Caco-2 (cell line): ENCODE measurements at regions of chr2 and their contacts with region 1.

Region 1: DNA sequence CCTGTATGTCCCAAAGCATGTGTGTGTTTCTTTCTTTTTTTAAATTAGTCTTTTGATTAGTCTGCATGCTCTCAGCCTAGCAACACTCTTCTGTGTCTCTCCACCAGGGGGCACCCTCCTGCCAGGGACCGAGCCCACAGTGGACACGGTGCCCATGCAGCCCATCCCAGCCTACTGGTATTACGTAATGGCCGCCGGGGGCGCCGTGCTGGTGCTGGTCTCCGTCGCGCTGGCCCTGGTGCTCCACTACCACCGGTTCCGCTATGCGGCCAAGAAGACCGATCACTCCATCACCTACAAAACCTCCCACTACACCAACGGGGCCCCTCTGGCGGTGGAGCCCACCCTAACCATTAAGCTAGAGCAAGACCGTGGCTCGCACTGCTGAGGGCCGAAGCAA is 93.8 kb downstream of the NRP2 start:
- DNase-seq: peak; percentile 71 to 74
- H3K4me3 ChIP-seq: no peak overlapping the region
- H3K4me3 Mint-ChIP-seq: no peak overlapping the region
- H3K27ac Mint-ChIP-seq: no peak overlapping the region
- H3K4me1 ChIP-seq: peaks cover 12% of the 10 kb centered on the region
- H3K4me1 Mint-ChIP-seq: peaks cover 4% of the 10 kb centered on the region
- H3K27me3 ChIP-seq: no peaks in the 10 kb centered on the region
- H3K27me3 Mint-ChIP-seq: no peaks in the 10 kb centered on the region
- CTCF ChIP-seq: peak; percentile 68 to 80

Region 2: DNA sequence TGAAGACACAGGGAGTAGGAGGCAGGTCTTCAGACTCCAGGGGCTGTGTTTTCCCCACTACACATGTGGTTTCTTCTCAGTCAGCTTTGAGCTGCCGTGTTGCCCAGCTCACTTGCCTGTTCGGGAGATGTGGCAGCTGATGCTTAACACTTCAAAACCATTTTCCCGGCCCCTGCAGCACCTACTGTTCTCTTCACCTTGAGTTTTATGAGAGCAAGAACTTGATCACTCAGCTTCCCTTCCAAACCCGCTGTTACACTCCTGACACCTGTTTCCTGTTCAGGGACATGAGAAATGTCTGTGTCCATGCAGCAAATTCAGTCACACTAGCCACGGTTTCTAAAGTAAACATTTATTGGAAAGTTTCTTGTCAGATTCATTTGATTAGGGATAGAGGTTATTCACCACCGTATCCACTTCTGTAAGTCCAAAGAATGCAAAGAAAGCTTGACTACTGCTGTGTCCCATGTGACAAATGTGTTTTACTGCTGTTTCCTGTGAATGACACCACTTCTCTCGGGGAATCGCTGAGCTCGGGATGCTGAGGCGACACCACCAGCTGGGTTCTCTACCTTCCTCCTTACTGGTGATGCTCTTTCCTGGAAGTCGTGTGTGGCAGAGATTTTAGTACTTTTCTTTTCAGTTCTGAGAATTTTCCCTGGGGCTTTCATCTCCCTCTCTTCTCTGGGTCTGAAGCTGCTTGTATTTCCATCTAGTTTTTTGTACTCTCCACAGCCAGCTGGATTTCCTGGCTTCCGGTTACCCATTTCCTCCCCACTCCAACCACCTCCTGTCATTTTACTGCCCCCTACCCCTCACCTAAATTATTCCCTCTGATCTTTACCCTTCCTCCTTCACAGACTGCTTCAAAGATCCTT is 1297.9 kb after region 1 on chr2:
- CTCF ChIA-PET with region 1: no interaction called
- POLR2A ChIA-PET with region 1: no interaction called
- intact Hi-C with region 1: loop called (anchors 5 kb)
- DNase-seq: no peak
- H3K4me3 ChIP-seq: no peak overlapping the region
- H3K4me3 Mint-ChIP-seq: no peak overlapping the region
- H3K27ac Mint-ChIP-seq: no peak overlapping the region
- H3K4me1 ChIP-seq: no peaks in the 10 kb centered on the region
- H3K4me1 Mint-ChIP-seq: no peaks in the 10 kb centered on the region
- H3K27me3 ChIP-seq: no peaks in the 10 kb centered on the region
- H3K27me3 Mint-ChIP-seq: peaks cover 28% of the 10 kb centered on the region
- CTCF ChIP-seq: no peak